Transverse colon (tissue), 4 donors: ENCODE measurements at regions of chr22 and their contacts with region 1.

Region 1: GRCh38 chr22:21712894-21713712 is 22.5 kb downstream of the YPEL1 start:
- DNase-seq: peak; percentile 59
- H3K4me3 ChIP-seq: no peak overlapping the region
- H3K27ac ChIP-seq: no peak overlapping the region
- H3K4me1 ChIP-seq: peaks cover 0 to 9% (median 0%) of the 10 kb centered on the region in 4 donors
- H3K27me3 ChIP-seq: no peaks in the 10 kb centered on the region
- CTCF ChIP-seq: peak; percentile 69 to 87 (median 75)
- EP300 ChIP-seq: no peak
- POLR2A ChIP-seq: no peak

Region 2: GRCh38 chr22:21587803-21588611 is 125.1 kb before region 1 on chr22:
- in situ Hi-C with region 1: loop called in 1 of 4 experiments (anchors 25 kb)
- intact Hi-C with region 1: no loop called
- DNase-seq: peak; percentile 22
- H3K4me3 ChIP-seq: no peak overlapping the region
- H3K27ac ChIP-seq: no peak overlapping the region
- H3K4me1 ChIP-seq: peaks cover 7 to 57% (median 20%) of the 10 kb centered on the region in 4 donors
- H3K27me3 ChIP-seq: no peaks in the 10 kb centered on the region
- CTCF ChIP-seq: no peak
- EP300 ChIP-seq: no peak
- POLR2A ChIP-seq: no peak

Region 3: GRCh38 chr22:21641789-21642583 is 71.1 kb before region 1 on chr22 and contains the start of gene SDF2L1:
- in situ Hi-C with region 1: no loop called
- intact Hi-C with region 1: no loop called
- DNase-seq: peak; percentile 99
- H3K4me3 ChIP-seq: peak within 1 kb of the TSS; percentile 51 to 81 (median 66)
- H3K27ac ChIP-seq: peak within 1 kb of the TSS; percentile 77 to 83 (median 80)
- H3K4me1 ChIP-seq: peaks cover 4 to 24% (median 21%) of the 10 kb centered on the region in 4 donors
- H3K27me3 ChIP-seq: no peaks in the 10 kb centered on the region
- CTCF ChIP-seq: peak in 1 of 5 experiments; percentile 18
- EP300 ChIP-seq: no peak
- POLR2A ChIP-seq: peak; percentile 47
- total RNA-seq, gene SDF2L1: 34.0 to 55.7 (median 39.5) TPM in 3 of 4 donors, not detected in the other

Region 4: DNA sequence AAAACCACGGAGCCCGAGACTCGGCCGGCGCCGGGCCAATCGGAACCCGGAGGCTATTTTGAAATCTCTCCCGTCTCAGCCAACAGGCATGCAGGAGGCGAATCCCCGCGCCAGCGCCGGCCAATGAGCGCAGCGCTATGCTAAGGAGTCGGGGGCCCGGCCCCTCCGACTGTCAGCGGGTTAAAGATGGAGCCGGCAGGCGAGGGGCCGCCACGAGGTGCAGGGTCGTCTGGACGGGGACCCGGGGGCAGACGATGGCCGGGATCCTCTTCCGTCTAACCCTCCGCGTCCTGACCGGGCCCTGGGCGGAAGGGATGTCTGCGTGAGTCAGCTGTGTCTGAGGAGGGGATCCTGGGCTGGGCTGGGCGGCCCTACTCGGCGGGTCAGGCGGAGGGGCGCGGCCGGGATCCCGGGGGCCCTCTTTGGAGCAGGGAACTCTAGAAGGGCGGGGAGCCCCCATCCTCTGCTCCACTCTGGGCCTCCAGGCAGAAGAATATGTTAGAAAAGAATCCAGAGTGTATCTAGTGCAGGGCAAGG is 61.0 kb before region 1 on chr22:
- in situ Hi-C with region 1: no loop called
- intact Hi-C with region 1: no loop called
- DNase-seq: peak; percentile 86
- H3K4me3 ChIP-seq: peak overlapping the region; percentile 32 to 55 (median 42)
- H3K27ac ChIP-seq: peak overlapping the region; percentile 8 to 56 (median 34)
- H3K4me1 ChIP-seq: peaks cover 13 to 23% (median 16%) of the 10 kb centered on the region in 4 donors
- H3K27me3 ChIP-seq: peaks cover 3% of the 10 kb centered on the region
- CTCF ChIP-seq: no peak
- EP300 ChIP-seq: no peak
- POLR2A ChIP-seq: no peak

Region 5: GRCh38 chr22:21666786-21667185 is 46.3 kb before region 1 on chr22:
- in situ Hi-C with region 1: no loop called
- intact Hi-C with region 1: no loop called
- DNase-seq: no peak
- H3K4me3 ChIP-seq: peak overlapping the region; percentile 45 to 91 (median 68)
- H3K27ac ChIP-seq: peak overlapping the region; percentile 89 to 97 (median 93)
- H3K4me1 ChIP-seq: peaks cover 4 to 15% (median 6%) of the 10 kb centered on the region in 4 donors
- H3K27me3 ChIP-seq: no peaks in the 10 kb centered on the region
- CTCF ChIP-seq: no peak
- EP300 ChIP-seq: no peak
- POLR2A ChIP-seq: no peak

Region 6: DNA sequence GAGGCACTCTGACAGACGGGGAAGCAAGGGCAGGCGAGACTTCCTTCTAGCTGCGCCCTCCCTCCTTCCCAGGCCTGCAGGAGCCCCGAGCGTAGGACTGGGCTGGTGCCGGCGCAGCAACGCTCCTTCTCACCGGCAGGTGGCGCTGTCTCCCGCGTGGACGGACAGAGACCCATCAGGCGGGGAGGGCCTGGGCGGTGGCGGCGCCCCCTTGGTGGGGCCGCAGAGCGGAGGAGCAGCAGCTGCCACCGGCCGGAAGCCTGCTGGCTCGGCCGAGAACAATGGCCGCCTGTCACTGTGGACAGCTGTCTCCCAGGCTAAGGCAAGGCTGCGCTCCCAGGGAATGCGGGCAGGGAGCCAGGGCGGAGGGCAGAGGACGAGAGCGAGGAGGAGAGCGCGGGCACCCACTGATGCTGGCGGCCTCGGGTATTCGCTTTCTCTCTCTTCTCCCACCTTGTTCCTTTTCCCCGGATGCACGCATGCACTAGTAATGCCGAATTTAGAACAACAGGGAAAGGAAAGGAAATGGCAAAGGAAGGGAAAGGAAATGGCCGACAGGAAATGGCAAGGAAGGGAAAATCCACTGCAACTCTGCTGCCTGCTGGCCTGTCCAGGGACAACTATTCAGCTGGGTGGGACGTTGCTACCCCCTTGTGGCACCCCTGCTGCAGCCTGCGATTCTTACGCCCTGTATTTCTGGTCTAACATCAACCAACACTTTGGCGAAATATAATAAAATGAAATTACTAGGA is 225.1 kb after region 1 on chr22:
- in situ Hi-C with region 1: loop called (anchors 5 to 25 kb)
- intact Hi-C with region 1: no loop called
- DNase-seq: peak; percentile 96
- H3K4me3 ChIP-seq: peak overlapping the region; percentile 44 to 69 (median 51)
- H3K27ac ChIP-seq: peak overlapping the region; percentile 91 to 97 (median 94)
- H3K4me1 ChIP-seq: peaks cover 27 to 58% (median 32%) of the 10 kb centered on the region in 4 donors
- H3K27me3 ChIP-seq: no peaks in the 10 kb centered on the region
- CTCF ChIP-seq: peak; percentile 98 to 100 (median 99)
- EP300 ChIP-seq: no peak
- POLR2A ChIP-seq: peak; percentile 67

Region 7: GRCh38 chr22:22001664-22002525 is 288.8 kb after region 1 on chr22:
- in situ Hi-C with region 1: no loop called
- intact Hi-C with region 1: no loop called
- DNase-seq: no peak
- H3K4me3 ChIP-seq: no peak overlapping the region
- H3K27ac ChIP-seq: no peak overlapping the region
- H3K4me1 ChIP-seq: no peaks in the 10 kb centered on the region
- H3K27me3 ChIP-seq: peaks cover 8% of the 10 kb centered on the region
- CTCF ChIP-seq: no peak
- EP300 ChIP-seq: no peak
- POLR2A ChIP-seq: no peak